MCF 10A (cell line): ENCODE measurements at regions of chr3 and their contacts with region 1.

Region 1: DNA sequence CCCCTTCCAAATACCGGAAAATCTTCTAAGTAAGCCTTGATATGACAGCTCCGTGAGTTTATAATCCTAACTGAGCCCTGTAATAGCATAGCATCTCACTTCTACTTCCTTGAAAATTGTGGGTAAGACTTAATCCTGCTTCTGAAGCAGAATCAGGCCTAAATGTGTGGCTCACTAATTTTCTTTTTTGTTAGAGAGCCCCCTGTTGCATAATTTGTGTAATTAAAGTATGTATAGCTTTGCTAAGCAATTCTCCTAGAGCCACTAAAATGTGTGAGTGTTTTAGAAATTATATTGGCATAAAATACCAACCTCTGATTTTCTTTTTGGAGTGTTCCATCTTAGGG is 304.4 kb downstream of the FGF12 start:
- DNase-seq: peak; percentile 43
- H3K4me3 Mint-ChIP-seq: no peak overlapping the region
- H3K27ac Mint-ChIP-seq: no peak overlapping the region
- H3K4me1 Mint-ChIP-seq: no peaks in the 10 kb centered on the region
- H3K27me3 Mint-ChIP-seq: peaks cover 5% of the 10 kb centered on the region
- CTCF ChIP-seq: peak; percentile 52

Region 2: GRCh38 chr3:191412759-191413158 is 1010.2 kb before region 1 on chr3:
- CTCF ChIA-PET with region 1: interaction called, 7 read pairs
- POLR2A ChIA-PET with region 1: interaction called, 4 read pairs
- intact Hi-C with region 1: loop called (anchors 1 kb)
- DNase-seq: peak; percentile 77
- H3K4me3 Mint-ChIP-seq: no peak overlapping the region
- H3K27ac Mint-ChIP-seq: peak overlapping the region; percentile 57
- H3K4me1 Mint-ChIP-seq: peaks cover 12% of the 10 kb centered on the region
- H3K27me3 Mint-ChIP-seq: no peaks in the 10 kb centered on the region
- CTCF ChIP-seq: no peak

Region 3: DNA sequence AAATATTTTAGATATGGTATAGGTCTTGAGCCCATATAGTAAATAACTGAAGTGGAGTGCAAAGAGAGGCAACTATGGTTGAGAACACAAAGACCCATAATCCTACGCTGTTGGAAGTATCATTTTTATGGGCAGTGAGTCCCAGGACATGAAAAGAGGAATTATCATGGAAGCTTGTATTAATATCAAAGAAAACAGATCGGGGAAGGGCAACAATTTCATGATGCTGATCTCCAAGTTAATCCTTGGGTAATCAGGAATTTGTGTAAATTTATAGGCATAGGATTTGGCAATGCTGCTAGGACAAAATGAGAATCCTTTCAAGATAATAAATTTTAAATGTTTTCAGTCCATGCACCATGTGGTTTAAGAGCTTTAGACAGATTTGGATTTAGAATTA is 1002.2 kb before region 1 on chr3:
- CTCF ChIA-PET with region 1: interaction called, 15 read pairs
- POLR2A ChIA-PET with region 1: no interaction called
- intact Hi-C with region 1: loop called (anchors 1 kb)
- DNase-seq: no peak
- H3K4me3 Mint-ChIP-seq: no peak overlapping the region
- H3K27ac Mint-ChIP-seq: no peak overlapping the region
- H3K4me1 Mint-ChIP-seq: peaks cover 5% of the 10 kb centered on the region
- H3K27me3 Mint-ChIP-seq: no peaks in the 10 kb centered on the region
- CTCF ChIP-seq: no peak

Region 4: GRCh38 chr3:192130534-192131132 is 292.3 kb before region 1 on chr3:
- CTCF ChIA-PET with region 1: interaction called, 10 read pairs
- POLR2A ChIA-PET with region 1: no interaction called
- intact Hi-C with region 1: loop called (anchors 1 kb)
- DNase-seq: peak; percentile 70
- H3K4me3 Mint-ChIP-seq: no peak overlapping the region
- H3K27ac Mint-ChIP-seq: no peak overlapping the region
- H3K4me1 Mint-ChIP-seq: no peaks in the 10 kb centered on the region
- H3K27me3 Mint-ChIP-seq: no peaks in the 10 kb centered on the region
- CTCF ChIP-seq: peak; percentile 70

Region 5: DNA sequence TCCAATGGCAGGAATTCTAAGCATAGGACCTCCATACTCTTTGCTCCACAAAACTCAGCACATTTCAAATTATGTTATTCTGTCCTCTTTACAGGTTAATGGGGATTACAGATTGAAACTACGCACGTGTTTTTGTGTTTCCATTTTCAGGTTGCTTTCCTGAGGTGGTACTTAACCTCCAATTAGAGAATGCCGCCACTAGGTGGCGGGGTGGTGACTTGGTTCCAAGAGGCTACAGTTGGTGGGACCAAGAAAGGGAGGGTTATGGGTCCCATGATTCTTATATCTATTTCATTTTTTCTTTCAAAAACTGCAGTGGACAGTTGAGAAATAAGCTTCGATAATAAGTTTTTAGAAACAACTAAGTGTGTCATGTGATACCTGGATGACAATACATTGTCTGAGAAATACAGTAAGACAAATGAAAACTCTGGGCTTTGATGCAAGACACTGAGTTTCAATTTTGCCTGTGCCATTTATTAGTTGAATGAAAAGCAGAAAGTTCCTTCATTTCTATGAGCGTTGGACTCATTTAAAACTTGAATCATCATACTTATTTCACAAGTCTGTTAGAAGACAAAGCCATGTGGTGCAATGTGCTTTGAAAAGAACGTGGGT is 234.6 kb before region 1 on chr3:
- CTCF ChIA-PET with region 1: interaction called, 49 read pairs
- POLR2A ChIA-PET with region 1: interaction called, 8 read pairs
- intact Hi-C with region 1: loop called (anchors 1 kb)
- DNase-seq: peak; percentile 71
- H3K4me3 Mint-ChIP-seq: no peak overlapping the region
- H3K27ac Mint-ChIP-seq: no peak overlapping the region
- H3K4me1 Mint-ChIP-seq: peaks cover 6% of the 10 kb centered on the region
- H3K27me3 Mint-ChIP-seq: no peaks in the 10 kb centered on the region
- CTCF ChIP-seq: peak; percentile 68

Region 6: GRCh38 chr3:192433704-192434103 is 10.7 kb after region 1 on chr3:
- CTCF ChIA-PET with region 1: interaction called, 34 read pairs
- POLR2A ChIA-PET with region 1: interaction called, 5 read pairs
- intact Hi-C with region 1: no loop called
- DNase-seq: peak; percentile 38
- H3K4me3 Mint-ChIP-seq: no peak overlapping the region
- H3K27ac Mint-ChIP-seq: no peak overlapping the region
- H3K4me1 Mint-ChIP-seq: no peaks in the 10 kb centered on the region
- H3K27me3 Mint-ChIP-seq: peaks cover 25% of the 10 kb centered on the region
- CTCF ChIP-seq: no peak

Region 7: GRCh38 chr3:192494174-192494573 is 71.2 kb after region 1 on chr3:
- CTCF ChIA-PET with region 1: no interaction called
- POLR2A ChIA-PET with region 1: no interaction called
- intact Hi-C with region 1: no loop called
- DNase-seq: peak; percentile 39
- H3K4me3 Mint-ChIP-seq: no peak overlapping the region
- H3K27ac Mint-ChIP-seq: no peak overlapping the region
- H3K4me1 Mint-ChIP-seq: no peaks in the 10 kb centered on the region
- H3K27me3 Mint-ChIP-seq: peaks cover 16% of the 10 kb centered on the region
- CTCF ChIP-seq: no peak

Region 8: DNA sequence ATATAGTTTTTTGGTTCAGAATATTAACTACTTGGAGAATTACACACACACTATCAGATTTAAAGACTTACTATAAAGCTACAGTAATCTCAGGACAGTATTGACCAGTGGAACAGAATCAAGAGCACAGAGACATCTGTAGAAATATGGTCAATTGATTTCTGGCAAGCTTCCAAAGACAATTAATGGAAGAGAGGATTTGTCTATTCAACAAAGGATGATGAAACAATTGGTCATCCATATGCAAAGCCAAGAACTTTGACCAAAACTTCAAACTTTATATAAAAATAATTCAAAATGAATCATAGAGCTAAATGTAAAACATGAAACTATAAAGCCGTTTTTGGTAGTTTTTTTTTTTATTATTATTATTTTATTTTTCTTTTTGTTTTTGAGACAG is 524.4 kb after region 1 on chr3:
- CTCF ChIA-PET with region 1: no interaction called
- POLR2A ChIA-PET with region 1: no interaction called
- intact Hi-C with region 1: no loop called
- DNase-seq: no peak
- H3K4me3 Mint-ChIP-seq: no peak overlapping the region
- H3K27ac Mint-ChIP-seq: no peak overlapping the region
- H3K4me1 Mint-ChIP-seq: no peaks in the 10 kb centered on the region
- H3K27me3 Mint-ChIP-seq: no peaks in the 10 kb centered on the region
- CTCF ChIP-seq: no peak